RWPE1 (cell line): ENCODE measurements at regions of chr1 and their contacts with region 1.

Region 1: GRCh38 chr1:175826705-175827104 is 83.3 kb upstream of the TNR start:
- DNase-seq: no peak
- H3K27ac ChIP-seq: no peak overlapping the region
- CTCF ChIP-seq: no peak

Region 2: DNA sequence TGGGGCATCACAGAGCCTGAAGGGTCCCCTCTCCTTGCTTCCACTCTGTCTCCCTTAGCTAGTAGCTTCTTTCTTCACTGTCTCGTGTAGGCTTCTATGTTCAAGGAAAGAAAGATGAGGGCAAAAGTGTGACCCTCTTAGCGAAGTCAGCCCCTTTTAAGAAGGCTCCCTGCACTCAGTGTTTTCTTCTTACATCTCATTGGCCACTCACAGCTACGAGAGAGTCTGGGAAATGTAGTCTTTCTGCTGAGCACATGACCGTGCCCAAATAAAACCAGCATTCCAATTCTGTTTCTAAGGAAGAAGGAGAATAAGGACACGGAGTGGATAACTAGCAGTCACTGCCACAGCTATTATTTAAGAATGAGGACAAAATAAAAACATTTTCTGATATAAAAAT is 21.6 kb after region 1 on chr1:
- CTCF ChIA-PET with region 1: no interaction called
- POLR2A ChIA-PET with region 1: interaction called, 14 read pairs
- DNase-seq: no peak
- H3K27ac ChIP-seq: no peak overlapping the region
- CTCF ChIP-seq: no peak

Region 3: GRCh38 chr1:175947771-175948170 is 121.1 kb after region 1 on chr1:
- CTCF ChIA-PET with region 1: no interaction called
- POLR2A ChIA-PET with region 1: no interaction called
- DNase-seq: no peak
- H3K27ac ChIP-seq: no peak overlapping the region
- CTCF ChIP-seq: no peak